ENCODE measurements at regions of chr2 and their contacts with region 1.

Region 1: GRCh38 chr2:27071277-27071989 is at the start of gene OST4:
- H3K4me3 ChIP-seq: peak within 1 kb of the TSS; percentile 90
- H3K27ac ChIP-seq: peak within 1 kb of the TSS; percentile 66; the same call in 1 of the 2 replicates
- H3K4me1 ChIP-seq: peaks cover 14% of the 10 kb centered on the region
- CTCF ChIP-seq: peak; percentile 76

Region 2: DNA sequence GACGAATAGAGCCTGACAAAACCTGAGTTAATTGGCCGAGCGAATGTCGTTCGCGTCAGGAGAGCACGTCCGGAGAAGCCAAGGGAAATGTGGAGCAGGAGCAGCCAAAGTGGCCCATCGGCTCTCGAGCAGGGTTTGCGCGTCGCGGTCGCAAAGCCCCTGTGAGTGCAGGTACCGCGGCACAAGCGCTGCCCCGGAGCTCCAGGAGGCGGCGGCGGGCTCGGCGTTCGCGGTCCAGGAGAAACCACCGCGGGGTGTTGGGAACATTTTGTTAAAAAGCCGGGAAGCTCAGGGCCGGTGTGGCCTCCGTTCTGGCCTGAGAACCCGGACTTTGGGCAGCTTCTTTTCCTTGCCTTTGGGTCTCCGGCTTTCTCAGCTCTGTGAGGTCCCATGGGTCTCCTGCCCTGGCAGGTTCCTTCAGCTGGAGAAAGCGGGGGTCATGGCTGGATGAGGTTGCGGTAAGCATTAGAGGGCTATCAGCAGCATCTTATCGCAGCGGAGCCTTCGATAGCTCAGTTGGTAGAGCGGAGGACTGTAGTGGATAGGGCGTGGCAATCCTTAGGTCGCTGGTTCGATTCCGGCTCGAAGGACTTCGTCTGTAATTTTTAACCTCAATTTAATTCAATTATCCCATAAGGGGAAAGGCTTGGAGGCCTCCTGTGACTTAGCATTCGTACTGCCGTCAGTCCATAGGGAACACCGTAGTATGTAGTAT is 21.0 kb before region 1 on chr2:
- CTCF ChIA-PET with region 1: interaction called, 3 read pairs
- POLR2A ChIA-PET with region 1: interaction called, 61 read pairs
- H3K4me3 ChIP-seq: peak overlapping the region; percentile 82
- H3K27ac ChIP-seq: peak overlapping the region; percentile 73
- H3K4me1 ChIP-seq: peaks cover 4% of the 10 kb centered on the region
- CTCF ChIP-seq: peak; percentile 72

Region 3: GRCh38 chr2:27059141-27059820 is 12.2 kb before region 1 on chr2:
- CTCF ChIA-PET with region 1: interaction called, 3 read pairs
- POLR2A ChIA-PET with region 1: interaction called, 22 read pairs
- H3K4me3 ChIP-seq: no peak overlapping the region
- H3K27ac ChIP-seq: no peak overlapping the region
- H3K4me1 ChIP-seq: no peaks in the 10 kb centered on the region
- CTCF ChIP-seq: no peak

Region 4: DNA sequence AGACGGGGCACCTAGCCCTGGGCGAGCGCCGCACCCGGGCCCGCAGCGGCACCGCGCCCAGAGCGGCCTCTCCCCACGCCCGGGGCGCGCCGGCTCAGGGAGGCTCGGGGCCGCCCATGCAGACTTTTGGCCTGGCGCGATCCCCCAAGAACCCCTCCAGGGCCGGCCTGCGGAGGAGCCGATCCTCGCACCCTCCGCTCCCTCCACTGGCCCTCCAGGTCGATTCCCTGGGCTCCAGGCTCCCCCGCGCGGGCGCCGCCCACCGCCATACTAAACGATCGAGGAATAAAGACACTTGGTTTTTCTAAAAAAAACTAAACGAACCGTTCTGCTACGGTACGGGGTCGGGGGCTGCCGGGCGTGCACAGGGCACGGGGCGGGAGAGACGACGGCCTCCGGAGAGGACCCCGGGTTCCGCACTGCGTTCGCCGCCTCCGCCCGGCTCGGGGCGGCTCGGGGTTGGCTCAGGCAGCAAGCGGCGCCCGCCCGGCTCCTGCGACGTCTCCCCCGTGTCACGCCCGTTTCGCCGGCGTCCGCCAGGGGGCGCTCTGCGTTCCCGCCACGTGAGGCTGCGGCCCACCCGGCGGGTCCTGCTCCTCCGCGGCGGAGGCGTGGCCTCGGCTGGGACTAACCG is 14.8 kb after region 1 on chr2:
- CTCF ChIA-PET with region 1: interaction called, 8 read pairs
- POLR2A ChIA-PET with region 1: interaction called, 45 read pairs
- H3K4me3 ChIP-seq: peak overlapping the region; percentile 46
- H3K27ac ChIP-seq: peak overlapping the region; percentile 72
- H3K4me1 ChIP-seq: peaks cover 8% of the 10 kb centered on the region
- CTCF ChIP-seq: peak; percentile 71